H1 (cell line): ENCODE measurements at regions of chr6 and their contacts with region 1.

Region 1: DNA sequence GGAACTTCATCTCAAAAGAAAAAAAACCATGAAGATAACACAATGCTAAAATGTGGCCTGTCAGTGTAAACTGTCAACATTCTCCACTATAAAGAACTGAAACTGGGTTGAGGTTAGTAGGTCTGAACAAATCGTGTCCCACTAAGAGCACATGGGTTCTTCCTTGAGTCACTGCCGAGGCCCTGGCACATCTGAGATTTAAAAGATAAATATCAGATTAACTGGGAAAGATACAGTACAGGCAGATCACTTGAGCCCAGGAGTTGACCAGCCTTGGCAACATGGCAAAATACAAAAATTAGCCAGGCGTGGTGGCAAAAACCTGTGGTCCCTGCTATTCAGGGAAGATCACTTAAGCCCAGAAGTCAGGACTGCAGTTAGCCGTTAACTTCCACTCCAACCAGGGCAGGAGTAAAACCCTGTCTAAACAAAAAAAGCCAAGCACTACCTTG is 5.6 kb downstream of the EEF1A1 start:
- DNase-seq: no peak
- H3K4me3 ChIP-seq: no peak overlapping the region
- H3K27ac ChIP-seq: no peak overlapping the region
- H3K4me1 ChIP-seq: peaks cover 0 to 3% (median 3%) of the 10 kb centered on the region in 4 experiments; a peak in 4 of 7 replicates
- H3K27me3 ChIP-seq: no peaks in the 10 kb centered on the region
- CTCF ChIP-seq: no peak
- EP300 ChIP-seq: no peak
- POLR2A ChIP-seq: peak; percentile 81 to 93
- RAD21 ChIP-seq: no peak

Region 2: GRCh38 chr6:73461537-73462350 is 53.5 kb before region 1 on chr6 and contains the start of gene MTO1:
- CTCF ChIA-PET with region 1: interaction called, 3 read pairs
- POLR2A ChIA-PET with region 1: interaction called, 39 read pairs
- DNase-seq: peak in 1 of 2 experiments; percentile 77
- H3K4me3 ChIP-seq: peak within 1 kb of the TSS; percentile 66 to 98 (median 86)
- H3K27ac ChIP-seq: peak within 1 kb of the TSS; percentile 62; the same call in 1 of the 2 replicates
- H3K4me1 ChIP-seq: no peaks in the 10 kb centered on the region; a peak in 1 of 7 replicates
- H3K27me3 ChIP-seq: no peaks in the 10 kb centered on the region
- CTCF ChIP-seq: no peak
- EP300 ChIP-seq: no peak
- POLR2A ChIP-seq: peak; percentile 42 to 84
- RAD21 ChIP-seq: no peak
- total RNA-seq, gene MTO1: 29.3 and 31.6 TPM in 2 replicates

Region 3: GRCh38 chr6:73537677-73538076 is 22.4 kb after region 1 on chr6:
- CTCF ChIA-PET with region 1: interaction called, 3 read pairs
- POLR2A ChIA-PET with region 1: interaction called, 267 read pairs
- DNase-seq: no peak
- H3K4me3 ChIP-seq: no peak overlapping the region
- H3K27ac ChIP-seq: no peak overlapping the region
- H3K4me1 ChIP-seq: no peaks in the 10 kb centered on the region
- H3K27me3 ChIP-seq: no peaks in the 10 kb centered on the region
- CTCF ChIP-seq: no peak
- EP300 ChIP-seq: no peak
- POLR2A ChIP-seq: no peak
- RAD21 ChIP-seq: no peak

Region 4: GRCh38 chr6:73631849-73632248 is 116.6 kb after region 1 on chr6:
- CTCF ChIA-PET with region 1: interaction called, 4 read pairs
- POLR2A ChIA-PET with region 1: interaction called, 50 read pairs
- DNase-seq: no peak
- H3K4me3 ChIP-seq: no peak overlapping the region
- H3K27ac ChIP-seq: no peak overlapping the region
- H3K4me1 ChIP-seq: no peaks in the 10 kb centered on the region
- H3K27me3 ChIP-seq: no peaks in the 10 kb centered on the region
- CTCF ChIP-seq: no peak
- EP300 ChIP-seq: no peak
- POLR2A ChIP-seq: no peak
- RAD21 ChIP-seq: no peak

Region 5: DNA sequence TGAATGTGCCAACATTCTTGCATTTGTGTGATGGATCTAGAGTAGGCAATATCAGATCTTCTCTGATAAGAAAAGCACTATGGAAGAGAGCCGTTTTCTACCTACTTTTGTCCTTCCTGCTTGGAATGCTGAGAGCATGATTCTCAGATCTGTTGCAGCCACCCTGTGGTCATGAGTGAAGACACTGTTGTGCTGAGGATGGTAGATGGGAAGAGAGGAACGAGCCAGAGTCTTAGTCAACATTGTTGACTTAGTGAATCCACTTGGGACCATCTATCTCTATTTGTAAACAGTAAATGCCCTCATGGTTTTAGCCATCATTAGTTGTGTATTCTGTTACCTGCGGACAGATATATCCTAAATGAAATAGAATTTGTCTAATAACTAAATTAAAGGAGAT is 383.4 kb after region 1 on chr6:
- CTCF ChIA-PET with region 1: no interaction called
- POLR2A ChIA-PET with region 1: no interaction called
- DNase-seq: no peak
- H3K4me3 ChIP-seq: no peak overlapping the region
- H3K27ac ChIP-seq: no peak overlapping the region
- H3K4me1 ChIP-seq: no peaks in the 10 kb centered on the region
- H3K27me3 ChIP-seq: no peaks in the 10 kb centered on the region
- CTCF ChIP-seq: peak in 1 of 3 experiments; percentile 27; a peak in 2 of 4 replicates
- EP300 ChIP-seq: no peak
- POLR2A ChIP-seq: no peak
- RAD21 ChIP-seq: peak; percentile 44 to 52

Region 6: GRCh38 chr6:73951183-73951582 is 436.0 kb after region 1 on chr6:
- CTCF ChIA-PET with region 1: no interaction called
- POLR2A ChIA-PET with region 1: no interaction called
- DNase-seq: no peak
- H3K4me3 ChIP-seq: no peak overlapping the region
- H3K27ac ChIP-seq: no peak overlapping the region
- H3K4me1 ChIP-seq: no peaks in the 10 kb centered on the region
- H3K27me3 ChIP-seq: no peaks in the 10 kb centered on the region
- CTCF ChIP-seq: no peak
- EP300 ChIP-seq: no peak
- POLR2A ChIP-seq: no peak
- RAD21 ChIP-seq: no peak